ENCODE measurements at regions of chr2 and their contacts with region 1.

Region 1: DNA sequence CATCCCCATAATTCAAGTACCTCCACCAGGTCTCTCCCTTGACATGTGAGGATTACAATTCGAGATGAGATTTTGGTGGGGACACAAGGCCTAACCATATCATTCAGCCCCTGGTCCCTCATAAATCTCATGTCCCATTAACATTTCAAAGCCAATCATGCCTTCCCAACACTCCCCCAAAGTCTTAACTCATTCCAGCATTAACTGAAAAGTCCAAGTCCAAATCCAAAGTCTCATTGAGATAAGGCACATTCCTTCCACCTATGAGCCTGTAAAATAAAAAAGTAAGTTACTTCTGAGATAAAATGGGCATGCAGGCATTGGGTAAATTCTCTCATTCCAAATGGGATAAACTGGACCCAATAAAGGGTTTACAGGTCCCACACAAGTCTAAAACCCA is 849.7 kb downstream of the BCL11A start:
- DNase-seq: no peak
- H3K4me3 ChIP-seq: no peak overlapping the region
- H3K4me3 Mint-ChIP-seq: no peak overlapping the region
- H3K27ac Mint-ChIP-seq: no peak overlapping the region
- H3K4me1 ChIP-seq: no peaks in the 10 kb centered on the region
- H3K4me1 Mint-ChIP-seq: no peaks in the 10 kb centered on the region
- H3K27me3 ChIP-seq: no peaks in the 10 kb centered on the region
- H3K27me3 Mint-ChIP-seq: no peaks in the 10 kb centered on the region
- CTCF ChIP-seq: no peak

Region 2: GRCh38 chr2:59630789-59631188 is 73.0 kb before region 1 on chr2:
- CTCF ChIA-PET with region 1: no interaction called
- POLR2A ChIA-PET with region 1: no interaction called
- intact Hi-C with region 1: no loop called
- DNase-seq: no peak
- H3K4me3 ChIP-seq: no peak overlapping the region
- H3K4me3 Mint-ChIP-seq: no peak overlapping the region
- H3K27ac Mint-ChIP-seq: no peak overlapping the region
- H3K4me1 ChIP-seq: no peaks in the 10 kb centered on the region
- H3K4me1 Mint-ChIP-seq: no peaks in the 10 kb centered on the region
- H3K27me3 ChIP-seq: no peaks in the 10 kb centered on the region
- H3K27me3 Mint-ChIP-seq: no peaks in the 10 kb centered on the region
- CTCF ChIP-seq: no peak

Region 3: DNA sequence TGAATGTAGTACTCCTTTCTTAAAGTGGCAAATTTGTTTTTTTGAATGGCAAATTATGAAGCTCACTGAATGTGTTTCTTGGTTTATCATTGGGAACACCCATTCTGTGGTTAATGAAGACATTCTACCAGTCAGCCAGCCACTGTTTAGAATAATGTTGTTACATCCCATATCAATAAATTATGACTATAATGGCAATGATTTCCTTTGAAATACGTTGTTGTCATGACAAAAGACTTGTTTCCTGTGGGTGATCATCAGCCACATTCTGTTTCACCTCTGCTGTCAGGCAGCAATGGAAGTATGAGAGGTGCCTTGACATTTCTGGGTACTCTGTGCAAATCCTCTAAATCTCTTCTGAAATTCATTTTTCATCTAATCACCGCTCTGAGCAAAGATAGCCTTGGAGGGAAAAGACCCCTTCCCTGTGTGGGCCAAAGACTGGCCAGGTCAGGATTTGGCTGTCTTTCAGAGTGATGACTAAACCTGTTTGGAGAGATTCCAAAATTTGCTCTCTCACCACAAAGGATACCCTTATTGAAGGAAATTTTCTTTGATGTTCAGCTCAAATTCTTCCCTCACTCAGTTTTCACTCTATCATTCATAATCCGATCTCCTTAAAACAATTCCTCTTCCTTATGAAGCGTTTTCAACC is 19.6 kb before region 1 on chr2:
- CTCF ChIA-PET with region 1: no interaction called
- POLR2A ChIA-PET with region 1: no interaction called
- intact Hi-C with region 1: no loop called
- DNase-seq: no peak
- H3K4me3 ChIP-seq: no peak overlapping the region
- H3K4me3 Mint-ChIP-seq: no peak overlapping the region
- H3K27ac Mint-ChIP-seq: no peak overlapping the region
- H3K4me1 ChIP-seq: no peaks in the 10 kb centered on the region
- H3K4me1 Mint-ChIP-seq: no peaks in the 10 kb centered on the region
- H3K27me3 ChIP-seq: no peaks in the 10 kb centered on the region
- H3K27me3 Mint-ChIP-seq: no peaks in the 10 kb centered on the region
- CTCF ChIP-seq: no peak

Region 4: DNA sequence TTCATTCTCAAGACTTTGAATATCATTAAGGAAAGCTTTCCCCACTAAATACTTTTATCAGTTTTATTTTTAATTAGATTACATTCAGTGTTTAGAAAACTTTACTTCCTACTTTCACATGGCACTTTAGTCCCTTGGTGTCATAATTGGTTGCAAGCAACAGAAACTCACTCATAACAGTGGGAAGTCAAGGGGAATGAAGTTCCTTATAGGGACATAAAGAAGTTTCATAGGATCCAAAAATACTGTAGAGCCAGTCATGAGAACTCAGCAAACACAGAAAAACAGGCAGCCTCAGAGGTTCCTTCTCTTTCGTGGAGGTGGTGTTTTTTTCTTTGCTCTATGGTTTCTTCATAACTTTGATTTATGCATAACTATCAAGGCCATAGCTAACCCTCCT is 40.6 kb after region 1 on chr2:
- CTCF ChIA-PET with region 1: no interaction called
- POLR2A ChIA-PET with region 1: no interaction called
- intact Hi-C with region 1: loop called (anchors 1 kb)
- DNase-seq: no peak
- H3K4me3 ChIP-seq: no peak overlapping the region
- H3K4me3 Mint-ChIP-seq: no peak overlapping the region
- H3K27ac Mint-ChIP-seq: no peak overlapping the region
- H3K4me1 ChIP-seq: 0 out of 2 replicates have a peak, but pooled peaks cover 4% of the 10 kb centered on the region
- H3K4me1 Mint-ChIP-seq: no peaks in the 10 kb centered on the region
- H3K27me3 ChIP-seq: no peaks in the 10 kb centered on the region
- H3K27me3 Mint-ChIP-seq: peaks cover 10% of the 10 kb centered on the region
- CTCF ChIP-seq: no peak

Region 5: DNA sequence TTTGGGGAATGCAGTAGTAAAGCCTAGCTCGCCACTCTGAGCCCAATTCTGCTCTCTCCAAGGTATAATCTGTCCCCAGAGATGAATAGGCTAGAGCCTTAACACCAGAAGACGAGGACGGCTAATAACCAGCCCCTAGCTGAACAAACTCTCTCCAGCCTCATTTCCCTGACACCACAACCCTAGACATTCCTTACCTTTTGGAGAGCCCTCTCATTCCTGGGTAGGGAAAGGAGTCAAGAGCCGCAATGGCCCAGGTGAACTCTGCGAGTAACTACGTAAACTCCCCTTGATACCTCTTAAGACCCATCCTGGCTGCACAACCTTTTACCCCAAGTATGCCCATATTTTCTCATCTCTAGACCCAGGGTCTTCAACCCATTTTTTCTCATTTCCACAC is 126.8 kb after region 1 on chr2:
- CTCF ChIA-PET with region 1: no interaction called
- POLR2A ChIA-PET with region 1: no interaction called
- intact Hi-C with region 1: no loop called
- DNase-seq: no peak
- H3K4me3 ChIP-seq: no peak overlapping the region
- H3K4me3 Mint-ChIP-seq: no peak overlapping the region
- H3K27ac Mint-ChIP-seq: no peak overlapping the region
- H3K4me1 ChIP-seq: no peaks in the 10 kb centered on the region
- H3K4me1 Mint-ChIP-seq: no peaks in the 10 kb centered on the region
- H3K27me3 ChIP-seq: no peaks in the 10 kb centered on the region
- H3K27me3 Mint-ChIP-seq: peaks cover 10% of the 10 kb centered on the region
- CTCF ChIP-seq: no peak